ENCODE measurements at regions of chr7 and their contacts with region 1.

Region 1: GRCh38 chr7:17530741-17531417 is 232.4 kb downstream of the AHR start:
- DNase-seq: no peak
- H3K4me3 ChIP-seq: no peak overlapping the region
- H3K27ac ChIP-seq: no peak overlapping the region
- H3K4me1 ChIP-seq: no peaks in the 10 kb centered on the region
- H3K27me3 ChIP-seq: no peaks in the 10 kb centered on the region
- CTCF ChIP-seq: peak; percentile 22

Region 2: DNA sequence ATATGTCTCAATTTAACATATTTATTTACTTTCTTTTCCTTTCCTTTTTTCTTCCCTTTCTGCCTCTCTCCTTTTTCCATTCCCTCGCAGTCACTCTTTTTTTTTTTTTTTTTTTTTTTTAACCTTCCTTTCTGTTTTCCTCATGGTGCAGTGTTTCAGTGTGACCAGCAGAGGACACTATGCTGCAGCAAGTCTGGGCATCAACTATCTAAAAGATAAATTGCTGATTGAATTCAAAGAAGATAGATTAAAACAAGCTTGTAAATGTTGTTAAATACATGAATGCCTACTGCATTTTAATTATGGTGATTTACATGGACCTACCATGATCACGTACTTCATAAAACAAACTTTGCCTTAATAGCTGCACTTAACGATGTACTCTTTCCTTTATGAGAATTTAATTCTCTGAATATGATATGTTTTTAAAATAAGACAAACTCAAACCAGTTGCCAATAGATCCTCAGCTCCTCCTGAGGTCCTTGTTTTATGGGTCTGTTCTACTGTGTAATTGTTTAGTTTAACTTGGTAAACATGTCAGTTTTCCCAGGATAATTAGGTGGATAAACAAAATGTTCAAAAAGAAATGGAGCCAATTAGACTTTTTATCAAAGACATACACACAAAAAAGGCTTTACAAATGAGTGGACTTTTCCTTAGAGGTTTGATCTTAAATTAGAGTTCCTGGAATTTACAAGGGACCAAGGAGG is 548.1 kb before region 1 on chr7:
- intact Hi-C with region 1: loop called (anchors 10 kb)
- DNase-seq: no peak
- H3K4me3 ChIP-seq: no peak overlapping the region
- H3K27ac ChIP-seq: no peak overlapping the region
- H3K4me1 ChIP-seq: peaks cover 5% of the 10 kb centered on the region
- H3K27me3 ChIP-seq: no peaks in the 10 kb centered on the region
- CTCF ChIP-seq: peak; percentile 86

Region 3: GRCh38 chr7:17347401-17347800 is 183.5 kb before region 1 on chr7:
- intact Hi-C with region 1: no loop called
- DNase-seq: no peak
- H3K4me3 ChIP-seq: no peak overlapping the region
- H3K27ac ChIP-seq: no peak overlapping the region
- H3K4me1 ChIP-seq: no peaks in the 10 kb centered on the region
- H3K27me3 ChIP-seq: no peaks in the 10 kb centered on the region
- CTCF ChIP-seq: no peak